HepG2 (cell line): ENCODE measurements at regions of chr16 and their contacts with region 1.

Region 1: DNA sequence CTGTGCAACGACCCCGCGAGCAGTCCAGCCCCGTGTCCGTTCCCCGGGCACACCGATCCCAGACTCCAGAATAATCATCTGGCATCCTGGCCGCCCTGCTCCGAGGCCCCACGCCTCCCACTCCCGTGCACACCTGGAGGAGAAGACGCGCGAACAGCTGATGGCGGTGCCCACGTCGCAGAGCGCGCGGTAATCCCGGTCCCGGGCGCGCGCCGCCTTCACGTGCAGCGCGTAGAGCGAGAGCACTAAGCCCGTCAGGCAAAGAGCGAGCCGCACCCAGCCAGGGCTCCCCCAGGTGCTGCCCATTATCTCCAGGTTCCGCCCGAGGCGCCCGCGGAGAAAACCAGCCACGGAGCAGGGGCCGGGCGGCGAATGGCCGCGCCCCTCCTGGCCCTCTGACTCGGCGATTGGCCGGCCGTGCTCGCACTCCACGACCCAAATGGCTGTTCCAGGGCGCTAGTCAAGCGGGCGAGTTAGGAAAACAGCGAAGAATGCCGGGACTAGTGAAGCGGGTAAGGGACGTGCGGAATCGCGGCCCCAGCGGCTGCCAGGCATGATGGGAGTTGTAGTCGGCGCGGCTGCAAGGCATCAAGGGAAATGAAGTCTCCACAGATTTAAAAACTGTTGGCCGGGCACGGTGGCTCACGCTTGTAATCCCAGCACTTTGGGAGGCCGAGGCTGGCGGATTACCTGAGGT is at the start of gene VKORC1:
- DNase-seq: peak; percentile 98
- ATAC-seq: peak; percentile 95
- H3K4me3 ChIP-seq: peak within 1 kb of the TSS; percentile 80 to 100 (median 82)
- H3K27ac ChIP-seq: peak within 1 kb of the TSS; percentile 84
- H3K4me1 ChIP-seq: peaks cover 27% of the 10 kb centered on the region
- H3K27me3 ChIP-seq: no peaks in the 10 kb centered on the region; a peak in 1 of 5 replicates
- CTCF ChIP-seq: peak; percentile 44
- EP300 ChIP-seq: peak in 1 of 2 experiments; percentile 44; a peak in 1 of 4 replicates
- POLR2A ChIP-seq: peak; percentile 84 to 90
- RAD21 ChIP-seq: peak; percentile 32; the same call in 1 of the 2 replicates
- total RNA-seq, gene VKORC1: 92.1 and 141 TPM in 2 replicates

Region 2: GRCh38 chr16:30957456-30958174 is 137.0 kb before region 1 on chr16 and contains the start of gene SETD1A:
- CTCF ChIA-PET with region 1: interaction called, 8 read pairs
- POLR2A ChIA-PET with region 1: interaction called, 4 read pairs
- in situ Hi-C with region 1: no loop called
- intact Hi-C with region 1: loop called (anchors 10 kb)
- DNase-seq: peak; percentile 93
- ATAC-seq: peak; percentile 65
- H3K4me3 ChIP-seq: peak within 1 kb of the TSS; percentile 84 to 98 (median 93)
- H3K27ac ChIP-seq: peak within 1 kb of the TSS; percentile 97
- H3K4me1 ChIP-seq: peaks cover 56% of the 10 kb centered on the region
- H3K27me3 ChIP-seq: no peaks in the 10 kb centered on the region; a peak in 1 of 5 replicates
- CTCF ChIP-seq: 0 out of 2 replicates have a peak, but pooled peaks have one; percentile 4
- EP300 ChIP-seq: peak in 1 of 2 experiments; percentile 35; a peak in 2 of 4 replicates
- POLR2A ChIP-seq: no peak; a peak in 2 of 4 replicates
- RAD21 ChIP-seq: peak; percentile 47; the same call in 1 of the 2 replicates
- total RNA-seq, gene SETD1A: 3.6 and 5.6 TPM in 2 replicates

Region 3: GRCh38 chr16:31022544-31023251 is 71.9 kb before region 1 on chr16:
- CTCF ChIA-PET with region 1: no interaction called
- POLR2A ChIA-PET with region 1: no interaction called
- in situ Hi-C with region 1: no loop called
- intact Hi-C with region 1: loop called (anchors 2 kb)
- DNase-seq: peak; percentile 30
- ATAC-seq: peak; percentile 21; the same call in 2 of the 3 replicates
- H3K4me3 ChIP-seq: peak overlapping the region in 2 of 3 experiments; percentile 19 to 43; a peak in 3 of 6 replicates
- H3K27ac ChIP-seq: peak overlapping the region; percentile 19
- H3K4me1 ChIP-seq: peaks cover 51% of the 10 kb centered on the region
- H3K27me3 ChIP-seq: peaks cover 0 to 2% of the 10 kb centered on the region in 2 experiments; a peak in 1 of 5 replicates
- CTCF ChIP-seq: no peak
- EP300 ChIP-seq: no peak
- POLR2A ChIP-seq: no peak
- RAD21 ChIP-seq: no peak

Region 4: DNA sequence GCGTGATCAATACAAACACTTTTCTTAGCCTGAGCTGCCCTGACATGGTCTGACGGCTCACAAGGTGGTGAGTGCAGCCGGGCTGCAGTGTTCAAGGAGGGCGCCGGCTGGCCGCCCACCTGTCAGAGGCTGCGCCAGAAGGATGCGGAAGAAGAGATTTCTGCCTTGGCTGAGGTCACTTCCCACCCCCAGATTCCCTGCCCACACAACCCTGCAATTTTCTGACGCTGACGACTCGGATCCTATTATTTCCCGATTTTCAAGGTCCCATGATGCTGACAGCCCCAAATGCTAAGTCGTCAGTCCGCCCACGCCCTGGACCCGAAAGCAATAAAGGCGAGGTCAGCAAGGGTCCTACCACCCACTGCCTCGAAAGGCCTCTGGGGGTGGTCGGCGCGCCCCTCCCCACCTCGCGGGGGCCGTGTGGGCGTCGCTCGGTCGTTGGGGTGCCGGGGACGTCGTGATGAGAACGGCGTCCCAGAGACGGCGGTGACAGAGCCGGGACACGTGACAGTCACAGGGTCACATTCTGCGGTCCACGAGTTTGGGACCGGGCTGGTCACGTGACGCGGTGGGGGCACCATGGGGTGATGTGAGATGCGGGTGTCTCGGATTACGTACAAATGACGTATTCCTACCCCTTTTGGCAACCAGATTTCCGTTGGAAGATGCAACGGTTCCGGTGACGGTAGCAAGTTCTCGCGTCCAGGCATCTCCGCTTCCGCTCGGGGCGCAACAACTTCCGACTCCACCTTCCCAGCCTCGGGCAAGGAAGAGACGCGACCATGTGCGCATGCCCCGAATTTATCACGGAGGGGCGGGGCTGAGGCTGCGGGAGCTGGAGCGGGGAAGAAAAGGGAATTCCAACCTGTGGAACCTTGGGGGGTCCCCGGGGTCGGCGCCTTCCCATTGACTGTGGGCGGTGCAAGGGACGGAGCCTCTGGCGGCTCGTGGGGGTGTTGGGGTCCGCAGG is 61.5 kb before region 1 on chr16 and contains the start of gene STX4:
- CTCF ChIA-PET with region 1: no interaction called
- POLR2A ChIA-PET with region 1: interaction called, 3 read pairs
- in situ Hi-C with region 1: no loop called
- intact Hi-C with region 1: loop called (anchors 1 kb)
- DNase-seq: peak; percentile 94
- ATAC-seq: peak; percentile 88
- H3K4me3 ChIP-seq: peak within 1 kb of the TSS; percentile 86 to 99 (median 94)
- H3K27ac ChIP-seq: peak within 1 kb of the TSS; percentile 82
- H3K4me1 ChIP-seq: peaks cover 39% of the 10 kb centered on the region
- H3K27me3 ChIP-seq: no peaks in the 10 kb centered on the region; a peak in 1 of 5 replicates
- CTCF ChIP-seq: peak; percentile 16; the same call in 1 of the 2 replicates
- EP300 ChIP-seq: no peak
- POLR2A ChIP-seq: peak; percentile 60 to 75; a peak in 2 of 4 replicates
- RAD21 ChIP-seq: no peak
- total RNA-seq, gene STX4: 29.2 and 31.3 TPM in 2 replicates

Region 5: GRCh38 chr16:31142109-31143010 is 47.8 kb after region 1 on chr16:
- CTCF ChIA-PET with region 1: no interaction called
- POLR2A ChIA-PET with region 1: interaction called, 28 read pairs
- in situ Hi-C with region 1: no loop called
- intact Hi-C with region 1: loop called (anchors 1 kb)
- DNase-seq: peak; percentile 98
- ATAC-seq: peak; percentile 74
- H3K4me3 ChIP-seq: peak overlapping the region; percentile 39 to 77 (median 64)
- H3K27ac ChIP-seq: peak overlapping the region; percentile 80
- H3K4me1 ChIP-seq: peaks cover 65% of the 10 kb centered on the region
- H3K27me3 ChIP-seq: peaks cover 0 to 14% of the 10 kb centered on the region in 2 experiments; a peak in 3 of 5 replicates
- CTCF ChIP-seq: peak; percentile 98
- EP300 ChIP-seq: peak; percentile 26 to 27; a peak in 1 of 4 replicates
- POLR2A ChIP-seq: no peak
- RAD21 ChIP-seq: peak; percentile 99

Region 6: GRCh38 chr16:31168848-31169247 is 74.3 kb after region 1 on chr16:
- CTCF ChIA-PET with region 1: no interaction called
- POLR2A ChIA-PET with region 1: no interaction called
- in situ Hi-C with region 1: no loop called
- intact Hi-C with region 1: no loop called
- DNase-seq: peak; percentile 58
- ATAC-seq: peak; percentile 78
- H3K4me3 ChIP-seq: no peak overlapping the region
- H3K27ac ChIP-seq: peak overlapping the region; percentile 26
- H3K4me1 ChIP-seq: peaks cover 48% of the 10 kb centered on the region
- H3K27me3 ChIP-seq: 0 out of 5 replicates have a peak, but pooled peaks cover 0 to 5% of the 10 kb centered on the region in 2 experiments
- CTCF ChIP-seq: no peak
- EP300 ChIP-seq: no peak
- POLR2A ChIP-seq: no peak
- RAD21 ChIP-seq: no peak

Region 7: DNA sequence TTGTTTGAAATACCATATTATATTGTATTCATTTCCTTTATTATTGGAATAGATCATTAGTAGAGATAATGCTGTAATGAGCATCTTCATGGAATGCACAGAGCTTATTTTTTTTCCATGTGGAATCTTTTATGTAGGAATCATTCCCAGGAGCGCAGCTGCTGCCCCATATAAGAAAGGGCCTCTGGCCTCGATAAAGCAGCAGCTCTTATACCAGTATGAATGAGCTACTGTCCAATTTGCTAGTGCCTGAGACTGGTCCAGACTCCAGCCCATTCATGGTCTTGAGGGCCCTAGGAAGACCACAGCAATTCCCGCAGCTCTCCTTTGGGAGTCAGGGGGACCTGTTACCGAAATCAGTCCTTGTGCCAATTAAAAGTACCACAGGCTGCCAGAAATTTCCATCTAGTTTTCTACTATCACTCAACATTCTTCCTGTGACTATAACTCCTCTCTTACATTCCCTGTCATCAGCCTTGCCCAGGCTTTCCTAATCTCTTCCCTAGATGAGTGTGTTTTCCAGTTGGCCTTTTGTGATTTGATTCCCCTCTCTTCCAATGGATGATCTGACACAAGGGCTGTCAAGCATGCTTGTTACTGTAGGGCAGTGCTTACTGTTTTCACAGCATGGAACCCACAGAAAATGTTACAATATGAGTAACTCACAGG is 346.1 kb after region 1 on chr16:
- CTCF ChIA-PET with region 1: no interaction called
- POLR2A ChIA-PET with region 1: no interaction called
- in situ Hi-C with region 1: no loop called
- intact Hi-C with region 1: loop called (anchors 2 kb)
- DNase-seq: no peak
- ATAC-seq: no peak
- H3K4me3 ChIP-seq: no peak overlapping the region
- H3K27ac ChIP-seq: no peak overlapping the region
- H3K4me1 ChIP-seq: peaks cover 6% of the 10 kb centered on the region; the same call in 1 of the 2 replicates
- H3K27me3 ChIP-seq: peaks cover 0 to 17% of the 10 kb centered on the region in 2 experiments; a peak in 2 of 5 replicates
- CTCF ChIP-seq: no peak
- EP300 ChIP-seq: no peak
- POLR2A ChIP-seq: no peak
- RAD21 ChIP-seq: no peak

Region 8: GRCh38 chr16:31458844-31459721 is 364.5 kb after region 1 on chr16 and contains the start of gene ARMC5:
- CTCF ChIA-PET with region 1: no interaction called
- POLR2A ChIA-PET with region 1: no interaction called
- in situ Hi-C with region 1: no loop called
- intact Hi-C with region 1: no loop called
- DNase-seq: peak; percentile 98
- ATAC-seq: peak; percentile 76
- H3K4me3 ChIP-seq: peak within 1 kb of the TSS; percentile 71 to 98 (median 83)
- H3K27ac ChIP-seq: peak within 1 kb of the TSS; percentile 95
- H3K4me1 ChIP-seq: peaks cover 48% of the 10 kb centered on the region
- H3K27me3 ChIP-seq: no peaks in the 10 kb centered on the region; a peak in 1 of 5 replicates
- CTCF ChIP-seq: peak; percentile 90
- EP300 ChIP-seq: no peak; a peak in 1 of 4 replicates
- POLR2A ChIP-seq: peak; percentile 87 to 97
- RAD21 ChIP-seq: peak; percentile 63
- total RNA-seq, gene ARMC5: 13.0 and 22.3 TPM in 2 replicates